ENCODE measurements at regions of chr17 and their contacts with region 1.

Region 1: GRCh38 chr17:78378225-78379130 is at the start of gene PGS1:
- DNase-seq: peak; percentile 71
- H3K4me3 ChIP-seq: peak within 1 kb of the TSS; percentile 62 to 75 (median 67)
- H3K27ac ChIP-seq: peak within 1 kb of the TSS; percentile 91
- H3K4me1 ChIP-seq: peaks cover 68% of the 10 kb centered on the region
- H3K27me3 ChIP-seq: no peaks in the 10 kb centered on the region
- CTCF ChIP-seq: no peak
- POLR2A ChIP-seq: peak; percentile 50
- total RNA-seq, gene PGS1: 55.6 and 66.0 TPM in 2 replicates

Region 2: GRCh38 chr17:78032166-78032565 is 346.3 kb before region 1 on chr17:
- CTCF ChIA-PET with region 1: no interaction called
- POLR2A ChIA-PET with region 1: interaction called, 10 read pairs
- dilution Hi-C with region 1: no loop called
- intact Hi-C with region 1: no loop called
- DNase-seq: no peak
- H3K4me3 ChIP-seq: no peak overlapping the region
- H3K27ac ChIP-seq: no peak overlapping the region
- H3K4me1 ChIP-seq: peaks cover 12% of the 10 kb centered on the region
- H3K27me3 ChIP-seq: no peaks in the 10 kb centered on the region
- CTCF ChIP-seq: no peak
- POLR2A ChIP-seq: no peak

Region 3: GRCh38 chr17:78224231-78225087 is 154.0 kb before region 1 on chr17:
- CTCF ChIA-PET with region 1: no interaction called
- POLR2A ChIA-PET with region 1: no interaction called
- dilution Hi-C with region 1: no loop called
- intact Hi-C with region 1: no loop called
- DNase-seq: no peak
- H3K4me3 ChIP-seq: no peak overlapping the region
- H3K27ac ChIP-seq: no peak overlapping the region
- H3K4me1 ChIP-seq: peaks cover 31% of the 10 kb centered on the region
- H3K27me3 ChIP-seq: no peaks in the 10 kb centered on the region
- CTCF ChIP-seq: no peak
- POLR2A ChIP-seq: no peak

Region 4: DNA sequence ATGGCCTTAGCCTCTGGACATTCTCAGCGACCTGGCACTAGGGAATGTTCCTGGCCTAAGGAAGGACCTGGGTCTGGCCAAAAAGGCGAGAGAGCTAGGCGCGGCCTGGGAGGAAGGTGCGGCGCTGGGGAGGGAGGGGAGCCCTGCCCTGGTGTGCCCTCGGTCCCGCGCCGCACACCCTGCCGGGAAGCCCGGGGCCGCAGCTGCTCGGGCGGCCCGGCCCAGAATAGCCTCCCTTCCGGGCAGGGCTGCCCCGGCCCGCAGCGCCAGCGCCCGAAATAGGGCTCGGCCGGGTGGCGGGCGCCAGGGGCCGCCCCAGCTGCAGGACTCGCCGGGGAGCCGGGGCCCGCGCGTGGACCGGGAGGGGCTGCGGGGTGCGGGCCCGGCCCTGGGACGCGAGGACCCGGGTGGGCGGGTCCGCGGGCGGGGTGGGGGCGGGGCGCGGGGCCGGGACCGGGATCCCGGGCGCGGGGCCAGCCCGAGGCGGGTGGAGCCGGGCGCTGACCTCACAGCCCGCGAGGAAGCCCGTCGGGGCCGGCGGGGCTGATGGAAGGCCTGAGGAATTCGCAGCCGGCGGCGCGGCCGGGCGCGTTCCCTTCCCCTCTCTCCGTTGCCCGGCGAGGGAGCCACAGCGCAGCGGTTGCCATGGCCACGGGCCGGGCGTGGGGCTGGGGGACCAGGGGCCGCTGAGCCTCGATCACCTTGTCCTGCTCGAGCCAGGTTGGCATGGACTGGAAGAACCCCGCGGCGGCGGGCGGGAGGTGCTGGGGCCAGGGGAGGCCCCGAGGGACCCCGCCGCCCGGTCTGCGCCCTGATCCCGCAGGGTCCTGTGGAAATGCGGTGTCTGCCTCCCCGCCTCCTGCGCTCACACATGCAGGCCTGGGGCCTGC is 36.7 kb before region 1 on chr17:
- CTCF ChIA-PET with region 1: no interaction called
- POLR2A ChIA-PET with region 1: no interaction called
- dilution Hi-C with region 1: no loop called
- intact Hi-C with region 1: loop called (anchors 2 kb)
- DNase-seq: peak; percentile 43
- H3K4me3 ChIP-seq: peak overlapping the region in 2 of 3 experiments; percentile 17 to 26
- H3K27ac ChIP-seq: peak overlapping the region; percentile 82
- H3K4me1 ChIP-seq: peaks cover 36% of the 10 kb centered on the region
- H3K27me3 ChIP-seq: no peaks in the 10 kb centered on the region
- CTCF ChIP-seq: no peak
- POLR2A ChIP-seq: peak; percentile 27

Region 5: DNA sequence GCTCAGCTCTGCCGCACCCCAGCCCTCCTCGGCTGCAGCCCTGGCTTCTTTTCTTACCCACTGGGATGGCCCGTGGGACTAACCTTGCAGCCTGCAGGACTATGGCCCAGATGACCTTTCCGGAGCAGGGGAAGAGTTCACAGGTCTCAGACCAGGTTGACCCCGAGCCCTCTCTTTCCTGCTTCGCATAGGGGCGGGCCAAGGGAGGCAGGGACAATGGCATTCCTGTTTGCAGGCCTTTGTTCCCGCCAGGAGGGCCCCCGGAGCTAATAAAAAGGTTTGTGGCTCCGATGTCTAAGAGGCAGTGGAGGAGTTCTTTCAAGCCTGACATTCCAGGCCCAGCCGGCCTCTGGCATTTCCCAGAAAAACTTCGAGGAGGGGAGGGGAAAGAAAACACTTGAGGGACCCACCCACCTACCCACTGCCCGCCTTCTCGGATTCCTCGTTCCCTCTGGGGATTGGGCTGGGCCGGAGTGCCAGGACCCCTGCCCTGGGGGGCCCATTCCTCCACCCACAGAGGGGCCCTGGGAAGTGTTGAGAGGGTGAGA is 12.8 kb before region 1 on chr17:
- CTCF ChIA-PET with region 1: interaction called, 36 read pairs
- POLR2A ChIA-PET with region 1: interaction called, 6 read pairs
- dilution Hi-C with region 1: no loop called
- intact Hi-C with region 1: loop called (anchors 1 kb)
- DNase-seq: no peak
- H3K4me3 ChIP-seq: no peak overlapping the region
- H3K27ac ChIP-seq: no peak overlapping the region
- H3K4me1 ChIP-seq: peaks cover 10% of the 10 kb centered on the region
- H3K27me3 ChIP-seq: no peaks in the 10 kb centered on the region
- CTCF ChIP-seq: no peak
- POLR2A ChIP-seq: no peak

Region 6: DNA sequence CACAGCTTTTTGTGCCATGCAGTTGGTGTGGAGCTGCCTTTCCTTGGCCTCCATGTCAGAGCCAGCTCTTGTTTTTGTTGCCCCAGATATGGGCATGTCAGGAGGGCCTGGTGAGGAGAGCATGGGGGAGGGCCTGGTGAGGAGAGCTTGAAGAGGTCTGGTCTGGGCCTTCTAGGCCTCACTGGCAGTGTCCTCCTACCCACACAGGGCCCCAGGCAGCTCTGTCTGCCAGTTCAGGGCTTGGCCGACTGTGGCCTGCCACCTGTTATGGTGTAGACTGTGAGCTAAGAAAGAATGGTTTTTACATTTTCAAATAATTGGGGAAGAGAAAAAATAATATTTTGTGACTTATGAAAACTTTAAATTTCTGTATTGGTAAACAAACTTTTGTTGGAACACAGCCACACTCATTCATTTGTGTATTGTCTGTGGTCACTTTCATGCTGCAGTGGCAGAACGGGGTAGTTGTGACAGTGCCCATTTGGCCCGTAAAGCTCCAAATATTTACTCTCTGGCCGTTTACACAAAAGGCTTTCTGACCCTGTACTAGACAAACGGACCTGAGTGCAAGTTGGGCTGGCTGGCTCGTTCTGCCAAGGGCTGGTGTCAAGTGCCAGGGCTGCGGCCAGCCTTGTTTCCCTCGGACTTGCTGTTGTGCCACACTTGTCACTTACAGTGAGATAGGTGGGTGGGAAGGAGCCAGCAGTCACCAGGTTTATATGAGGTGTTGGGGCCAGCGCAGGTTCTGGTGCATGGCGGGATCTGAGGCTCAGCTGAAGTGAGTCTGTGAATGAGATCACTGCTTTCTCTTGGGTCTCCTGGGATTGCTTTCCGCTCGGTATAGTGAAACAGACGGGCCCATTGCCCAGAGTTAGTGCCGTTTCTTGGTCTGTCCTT is 18.2 kb after region 1 on chr17:
- CTCF ChIA-PET with region 1: interaction called, 6 read pairs
- POLR2A ChIA-PET with region 1: no interaction called
- dilution Hi-C with region 1: no loop called
- intact Hi-C with region 1: loop called (anchors 1 kb)
- DNase-seq: no peak
- H3K4me3 ChIP-seq: no peak overlapping the region
- H3K27ac ChIP-seq: no peak overlapping the region
- H3K4me1 ChIP-seq: peaks cover 21% of the 10 kb centered on the region
- H3K27me3 ChIP-seq: no peaks in the 10 kb centered on the region
- CTCF ChIP-seq: no peak
- POLR2A ChIP-seq: no peak

Region 7: DNA sequence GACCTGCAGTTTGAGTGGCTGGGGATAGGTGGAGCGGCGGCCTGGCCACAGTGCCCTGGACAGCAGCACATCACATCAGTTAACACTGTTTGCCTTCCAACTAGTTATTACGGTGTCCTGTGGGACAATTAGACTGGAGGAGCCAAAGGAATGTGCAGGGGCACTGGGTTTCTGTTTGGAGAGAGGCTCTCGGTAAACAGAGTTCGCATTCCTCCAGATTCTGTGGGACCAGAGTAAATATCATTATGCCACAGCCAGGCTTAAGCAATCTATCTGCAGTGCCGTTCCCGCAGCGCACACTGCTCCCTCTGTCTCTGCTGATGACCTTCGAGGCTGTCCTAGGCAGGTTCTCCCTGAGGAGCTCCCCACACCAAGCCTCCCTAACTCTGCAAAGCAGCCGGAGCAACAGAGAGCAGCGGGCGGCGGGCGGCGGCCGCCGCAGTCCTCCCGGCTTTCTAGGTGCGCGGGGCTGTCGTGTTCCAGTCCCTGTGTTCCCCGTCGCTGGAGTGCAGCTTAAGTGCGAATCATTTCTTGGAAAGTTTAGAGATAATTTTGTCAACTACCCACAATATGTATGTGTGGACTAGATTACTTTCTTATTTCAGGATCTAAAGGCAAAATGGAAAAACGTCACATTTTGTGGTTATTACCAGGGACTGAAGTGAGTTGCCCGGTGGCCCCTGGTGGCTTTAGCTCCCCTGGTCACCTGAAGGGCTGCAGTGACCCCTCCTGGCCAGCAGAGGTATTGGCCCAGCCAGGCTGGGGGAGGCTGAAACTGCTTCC is 43.2 kb after region 1 on chr17:
- CTCF ChIA-PET with region 1: interaction called, 12 read pairs
- POLR2A ChIA-PET with region 1: interaction called, 10 read pairs
- dilution Hi-C with region 1: no loop called
- intact Hi-C with region 1: no loop called
- DNase-seq: peak; percentile 77
- H3K4me3 ChIP-seq: no peak overlapping the region
- H3K27ac ChIP-seq: no peak overlapping the region
- H3K4me1 ChIP-seq: peaks cover 9% of the 10 kb centered on the region
- H3K27me3 ChIP-seq: no peaks in the 10 kb centered on the region
- CTCF ChIP-seq: peak; percentile 97 to 98
- POLR2A ChIP-seq: no peak